HCT116 (cell line): ENCODE measurements at regions of chr2 and their contacts with region 1.

Region 1: DNA sequence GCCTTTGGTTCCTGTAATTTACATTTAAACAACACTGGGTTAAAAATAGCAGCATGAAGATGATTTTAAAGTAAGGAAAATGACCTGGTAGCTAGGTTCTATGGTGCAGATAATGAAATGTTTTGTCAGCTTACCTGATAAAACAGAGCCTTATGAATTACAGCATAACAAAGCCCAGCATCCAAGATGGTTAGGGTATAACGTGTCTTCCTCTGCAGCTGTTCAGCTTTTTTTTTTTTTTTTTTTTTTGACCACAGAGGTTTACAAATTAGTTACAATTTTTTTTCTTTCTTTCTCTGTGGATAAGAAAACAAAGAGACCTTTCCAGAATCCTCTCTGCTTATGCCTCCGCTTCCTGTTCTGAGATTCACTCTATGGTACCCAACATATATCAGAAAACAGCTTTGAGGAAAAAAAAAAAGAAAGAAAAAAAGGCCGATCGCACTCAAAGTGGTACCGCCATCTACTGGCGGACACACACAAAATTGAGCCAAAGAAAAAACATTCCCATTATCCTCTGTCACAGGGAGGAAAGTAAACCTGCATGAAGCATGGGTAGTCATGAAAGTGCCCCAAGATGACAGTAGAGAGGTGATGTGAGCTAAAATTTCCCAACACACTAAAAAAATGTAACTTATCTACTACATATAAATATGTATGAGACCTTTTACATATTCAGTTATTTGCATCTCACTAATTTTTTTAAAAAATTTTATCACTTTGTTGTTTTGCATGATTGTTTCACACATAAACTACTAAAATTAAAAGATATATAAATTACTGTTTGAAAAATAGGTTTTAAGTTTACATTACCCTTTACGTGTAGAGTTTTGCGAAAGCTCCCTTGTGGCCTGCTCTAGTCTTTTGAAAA is at the start of gene SCN3A:
- DNase-seq: peak; percentile 24
- ATAC-seq: peak; percentile 63; the same call in 1 of the 2 replicates
- H3K4me3 ChIP-seq: no peak within 1 kb of the TSS
- H3K27ac ChIP-seq: no peak within 1 kb of the TSS
- H3K4me1 ChIP-seq: no peaks in the 10 kb centered on the region
- H3K27me3 ChIP-seq: peaks cover 36% of the 10 kb centered on the region
- CTCF ChIP-seq: peak; percentile 66 to 78 (median 67); a peak in 5 of 6 replicates
- POLR2A ChIP-seq: no peak
- RAD21 ChIP-seq: peak; percentile 65
- total RNA-seq, gene SCN3A: not detected

Region 2: GRCh38 chr2:164737612-164738081 is 466.3 kb before region 1 on chr2:
- CTCF ChIA-PET with region 1: interaction called, 3 read pairs
- POLR2A ChIA-PET with region 1: no interaction called
- RAD21 ChIA-PET with region 1: no interaction called
- intact Hi-C with region 1: loop called (anchors 5 kb)
- DNase-seq: peak; percentile 73
- ATAC-seq: peak; percentile 94
- H3K4me3 ChIP-seq: no peak overlapping the region
- H3K27ac ChIP-seq: no peak overlapping the region
- H3K4me1 ChIP-seq: peaks cover 0 to 20% of the 10 kb centered on the region in 2 experiments; a peak in 3 of 4 replicates
- H3K27me3 ChIP-seq: no peaks in the 10 kb centered on the region
- CTCF ChIP-seq: peak; percentile 57 to 90 (median 81)
- POLR2A ChIP-seq: no peak
- RAD21 ChIP-seq: peak; percentile 92

Region 3: GRCh38 chr2:164992818-164993217 is 211.1 kb before region 1 on chr2:
- CTCF ChIA-PET with region 1: interaction called, 17 read pairs
- POLR2A ChIA-PET with region 1: no interaction called
- RAD21 ChIA-PET with region 1: interaction called in 1 of 2 experiments, 6 read pairs
- intact Hi-C with region 1: no loop called
- DNase-seq: peak; percentile 58
- ATAC-seq: peak; percentile 76
- H3K4me3 ChIP-seq: no peak overlapping the region
- H3K27ac ChIP-seq: no peak overlapping the region
- H3K4me1 ChIP-seq: no peaks in the 10 kb centered on the region
- H3K27me3 ChIP-seq: no peaks in the 10 kb centered on the region
- CTCF ChIP-seq: peak; percentile 24 to 56 (median 47); a peak in 4 of 6 replicates
- POLR2A ChIP-seq: no peak
- RAD21 ChIP-seq: peak; percentile 69

Region 4: GRCh38 chr2:165003433-165004130 is 200.3 kb before region 1 on chr2:
- CTCF ChIA-PET with region 1: interaction called, 3 read pairs
- POLR2A ChIA-PET with region 1: no interaction called
- RAD21 ChIA-PET with region 1: no interaction called
- intact Hi-C with region 1: loop called (anchors 5 kb)
- DNase-seq: peak; percentile 10
- ATAC-seq: peak; percentile 76
- H3K4me3 ChIP-seq: no peak overlapping the region
- H3K27ac ChIP-seq: no peak overlapping the region
- H3K4me1 ChIP-seq: no peaks in the 10 kb centered on the region
- H3K27me3 ChIP-seq: peaks cover 9% of the 10 kb centered on the region; the same call in 1 of the 2 replicates
- CTCF ChIP-seq: no peak
- POLR2A ChIP-seq: no peak
- RAD21 ChIP-seq: no peak

Region 5: DNA sequence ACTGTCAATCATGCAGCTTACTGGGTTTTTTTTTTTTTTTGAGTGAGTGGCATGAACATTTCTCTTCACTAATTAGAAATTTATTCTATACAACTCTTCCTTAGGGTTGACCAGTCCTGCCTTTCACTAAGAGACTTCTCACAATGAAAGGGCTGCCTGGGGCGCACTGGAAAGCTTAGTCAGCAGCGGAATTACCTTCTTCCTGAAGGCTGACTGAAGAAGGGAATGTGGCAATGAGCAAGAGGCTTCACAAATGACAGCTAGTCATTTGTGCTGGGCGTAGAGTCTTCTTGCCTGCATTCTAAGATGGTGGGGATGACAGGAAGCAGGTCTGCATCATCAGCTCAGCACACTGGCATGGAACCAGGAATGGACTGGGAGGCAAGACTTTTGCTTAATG is 15.6 kb after region 1 on chr2:
- CTCF ChIA-PET with region 1: interaction called, 10 read pairs
- POLR2A ChIA-PET with region 1: no interaction called
- RAD21 ChIA-PET with region 1: no interaction called
- intact Hi-C with region 1: no loop called
- DNase-seq: no peak
- ATAC-seq: no peak
- H3K4me3 ChIP-seq: no peak overlapping the region
- H3K27ac ChIP-seq: no peak overlapping the region
- H3K4me1 ChIP-seq: no peaks in the 10 kb centered on the region
- H3K27me3 ChIP-seq: peaks cover 11% of the 10 kb centered on the region; the same call in 1 of the 2 replicates
- CTCF ChIP-seq: no peak
- POLR2A ChIP-seq: no peak
- RAD21 ChIP-seq: no peak

Region 6: GRCh38 chr2:165610591-165611029 is 406.7 kb after region 1 on chr2:
- CTCF ChIA-PET with region 1: no interaction called
- POLR2A ChIA-PET with region 1: no interaction called
- RAD21 ChIA-PET with region 1: no interaction called
- intact Hi-C with region 1: no loop called
- DNase-seq: no peak
- ATAC-seq: no peak
- H3K4me3 ChIP-seq: no peak overlapping the region
- H3K27ac ChIP-seq: no peak overlapping the region
- H3K4me1 ChIP-seq: no peaks in the 10 kb centered on the region
- H3K27me3 ChIP-seq: peaks cover 7% of the 10 kb centered on the region; the same call in 1 of the 2 replicates
- CTCF ChIP-seq: no peak
- POLR2A ChIP-seq: no peak
- RAD21 ChIP-seq: no peak

Region 7: DNA sequence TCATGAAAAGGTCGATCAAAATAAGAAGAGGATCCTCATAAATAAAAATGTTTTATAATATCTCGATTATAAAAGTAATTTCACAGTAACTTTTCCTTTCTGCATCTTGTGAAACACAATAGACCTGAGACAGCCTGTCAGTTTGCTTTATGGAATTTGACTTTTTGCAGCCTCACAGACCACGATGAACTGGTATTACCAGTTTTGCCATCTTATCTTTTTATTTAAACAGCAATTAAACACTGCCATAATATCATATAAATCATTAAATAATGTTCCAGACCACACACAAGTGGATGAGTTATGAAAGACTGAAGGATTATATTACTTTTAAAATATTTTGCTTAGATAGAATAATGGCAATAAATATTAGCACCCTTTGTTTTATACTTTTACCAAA is 600.8 kb after region 1 on chr2:
- CTCF ChIA-PET with region 1: no interaction called
- POLR2A ChIA-PET with region 1: no interaction called
- RAD21 ChIA-PET with region 1: no interaction called
- intact Hi-C with region 1: no loop called
- DNase-seq: no peak
- ATAC-seq: no peak
- H3K4me3 ChIP-seq: no peak overlapping the region
- H3K27ac ChIP-seq: no peak overlapping the region
- H3K4me1 ChIP-seq: no peaks in the 10 kb centered on the region
- H3K27me3 ChIP-seq: no peaks in the 10 kb centered on the region
- CTCF ChIP-seq: no peak
- POLR2A ChIP-seq: no peak
- RAD21 ChIP-seq: no peak

Region 8: DNA sequence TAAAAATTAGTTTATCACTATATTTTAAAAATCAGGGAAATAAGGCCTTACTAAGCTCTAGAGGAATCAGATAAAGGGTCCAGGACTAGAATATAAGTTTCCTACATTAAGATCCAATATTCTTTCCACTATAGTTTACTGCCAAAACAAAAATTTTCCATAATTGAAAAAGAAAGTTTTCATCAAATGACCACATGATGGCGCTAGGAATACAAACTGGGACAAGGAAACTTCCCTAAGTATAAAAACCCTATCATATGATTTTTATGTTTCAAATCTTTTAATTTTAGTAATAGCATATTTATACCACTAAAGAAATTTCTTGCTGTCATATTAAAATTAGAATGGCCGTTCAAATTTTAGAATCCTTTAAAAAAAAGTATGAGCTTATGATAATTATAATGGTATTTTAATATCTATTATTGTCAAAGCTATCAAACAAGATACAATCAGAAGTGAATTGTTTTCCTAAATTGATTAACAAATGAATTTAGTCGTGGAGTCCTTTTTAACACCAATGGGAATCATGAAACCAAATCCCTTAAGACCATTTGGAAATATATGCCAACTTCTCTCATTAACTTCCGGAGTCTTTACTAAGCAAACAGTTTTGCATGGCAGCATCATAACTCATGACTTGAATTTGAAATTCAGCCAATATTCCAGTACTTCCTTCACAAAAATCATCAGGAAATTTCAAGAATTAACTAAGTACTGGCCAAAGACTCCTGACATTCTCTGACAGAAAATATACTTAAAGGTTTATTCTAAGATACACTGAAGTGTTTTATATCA is 853.6 kb after region 1 on chr2:
- CTCF ChIA-PET with region 1: no interaction called
- POLR2A ChIA-PET with region 1: no interaction called
- RAD21 ChIA-PET with region 1: no interaction called
- intact Hi-C with region 1: no loop called
- DNase-seq: no peak
- ATAC-seq: peak; percentile 44; the same call in 1 of the 2 replicates
- H3K4me3 ChIP-seq: no peak overlapping the region
- H3K27ac ChIP-seq: no peak overlapping the region
- H3K4me1 ChIP-seq: no peaks in the 10 kb centered on the region
- H3K27me3 ChIP-seq: peaks cover 36% of the 10 kb centered on the region
- CTCF ChIP-seq: peak; percentile 41 to 56 (median 54); a peak in 5 of 6 replicates
- POLR2A ChIP-seq: no peak
- RAD21 ChIP-seq: peak; percentile 56